ENCODE measurements at regions of chr11 and their contacts with region 1.

Region 1: DNA sequence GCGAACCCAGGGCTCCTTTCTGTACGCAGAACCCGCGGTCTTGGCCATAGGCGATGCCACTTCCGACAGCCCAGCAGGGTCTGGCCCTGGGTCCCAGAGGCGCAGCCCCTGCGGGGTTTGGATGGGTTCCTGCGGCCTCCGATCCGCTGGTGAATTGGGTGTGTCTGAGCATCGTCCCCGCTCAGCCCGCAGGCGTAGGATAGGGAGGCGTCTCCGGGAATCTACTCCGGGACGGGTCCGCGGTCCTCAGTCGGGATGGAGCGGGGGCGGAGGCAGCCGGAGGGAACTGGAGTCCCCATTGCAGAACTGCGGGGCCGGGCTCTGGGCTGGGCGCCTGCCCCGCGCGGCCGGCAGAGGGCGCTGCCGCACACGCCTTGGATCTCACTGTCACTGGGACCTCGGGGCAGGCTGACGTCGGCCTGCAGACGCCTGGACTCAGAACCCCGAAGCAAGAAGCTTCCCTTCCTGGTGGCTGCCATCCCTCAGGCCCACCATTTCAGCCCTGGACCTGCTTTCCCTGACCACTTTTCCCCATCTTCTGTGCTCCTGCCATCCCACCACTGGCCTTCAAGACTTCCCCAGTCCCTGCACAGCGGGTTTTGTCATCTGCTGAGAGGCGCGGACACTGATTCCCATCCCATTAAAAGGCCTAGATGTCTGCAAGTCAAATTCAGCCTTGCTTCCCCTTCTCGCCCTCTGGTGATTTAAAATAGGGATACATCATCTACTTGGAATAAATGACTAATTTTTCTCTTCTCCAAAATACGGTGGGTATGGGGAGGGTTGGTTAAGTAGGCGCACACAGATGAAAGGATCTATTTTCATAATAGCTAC is 38.3 kb upstream of the CREB3L1 start:
- DNase-seq: peak; percentile 96
- ATAC-seq: peak; percentile 80
- H3K4me3 Mint-ChIP-seq: peak overlapping the region; percentile 66
- H3K27ac Mint-ChIP-seq: no peak overlapping the region
- H3K4me1 Mint-ChIP-seq: peaks cover 44% of the 10 kb centered on the region
- H3K27me3 Mint-ChIP-seq: peaks cover 43% of the 10 kb centered on the region
- CTCF ChIP-seq: peak; percentile 97

Region 2: DNA sequence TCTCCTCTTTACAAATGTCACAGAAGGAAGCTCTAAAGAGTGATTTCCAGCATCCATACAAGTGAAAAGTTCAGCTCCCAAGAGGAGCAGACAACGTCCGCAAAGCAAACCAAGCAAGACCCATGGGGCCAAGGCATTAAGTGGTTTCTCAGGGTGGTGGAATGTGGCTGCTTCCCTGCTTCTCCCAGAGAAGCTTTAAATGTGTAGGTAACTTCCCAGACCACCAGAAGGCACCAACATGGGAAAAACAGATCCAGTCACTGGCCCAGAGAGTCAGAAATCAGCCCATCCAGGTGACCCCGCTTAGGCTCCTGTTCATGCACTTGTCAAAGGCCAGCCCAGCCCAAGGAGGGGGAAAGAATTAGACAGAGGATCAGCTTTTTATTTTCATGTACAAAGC is 104.6 kb before region 1 on chr11:
- CTCF ChIA-PET with region 1: interaction called, 35 read pairs
- POLR2A ChIA-PET with region 1: interaction called, 3 read pairs
- DNase-seq: peak; percentile 32
- ATAC-seq: peak; percentile 93
- H3K4me3 Mint-ChIP-seq: no peak overlapping the region
- H3K27ac Mint-ChIP-seq: 0 out of 2 replicates have a peak overlapping the region, but pooled peaks have one; percentile 15
- H3K4me1 Mint-ChIP-seq: peaks cover 26% of the 10 kb centered on the region
- H3K27me3 Mint-ChIP-seq: no peaks in the 10 kb centered on the region; the same call in 1 of the 2 replicates
- CTCF ChIP-seq: no peak

Region 3: GRCh38 chr11:46308631-46309419 is 69.6 kb after region 1 on chr11:
- CTCF ChIA-PET with region 1: interaction called, 119 read pairs
- POLR2A ChIA-PET with region 1: interaction called, 12 read pairs
- DNase-seq: peak; percentile 87
- ATAC-seq: peak; percentile 85
- H3K4me3 Mint-ChIP-seq: no peak overlapping the region
- H3K27ac Mint-ChIP-seq: 0 out of 2 replicates have a peak overlapping the region, but pooled peaks have one; percentile 27
- H3K4me1 Mint-ChIP-seq: peaks cover 19% of the 10 kb centered on the region
- H3K27me3 Mint-ChIP-seq: no peaks in the 10 kb centered on the region; the same call in 1 of the 2 replicates
- CTCF ChIP-seq: peak; percentile 85

Region 4: DNA sequence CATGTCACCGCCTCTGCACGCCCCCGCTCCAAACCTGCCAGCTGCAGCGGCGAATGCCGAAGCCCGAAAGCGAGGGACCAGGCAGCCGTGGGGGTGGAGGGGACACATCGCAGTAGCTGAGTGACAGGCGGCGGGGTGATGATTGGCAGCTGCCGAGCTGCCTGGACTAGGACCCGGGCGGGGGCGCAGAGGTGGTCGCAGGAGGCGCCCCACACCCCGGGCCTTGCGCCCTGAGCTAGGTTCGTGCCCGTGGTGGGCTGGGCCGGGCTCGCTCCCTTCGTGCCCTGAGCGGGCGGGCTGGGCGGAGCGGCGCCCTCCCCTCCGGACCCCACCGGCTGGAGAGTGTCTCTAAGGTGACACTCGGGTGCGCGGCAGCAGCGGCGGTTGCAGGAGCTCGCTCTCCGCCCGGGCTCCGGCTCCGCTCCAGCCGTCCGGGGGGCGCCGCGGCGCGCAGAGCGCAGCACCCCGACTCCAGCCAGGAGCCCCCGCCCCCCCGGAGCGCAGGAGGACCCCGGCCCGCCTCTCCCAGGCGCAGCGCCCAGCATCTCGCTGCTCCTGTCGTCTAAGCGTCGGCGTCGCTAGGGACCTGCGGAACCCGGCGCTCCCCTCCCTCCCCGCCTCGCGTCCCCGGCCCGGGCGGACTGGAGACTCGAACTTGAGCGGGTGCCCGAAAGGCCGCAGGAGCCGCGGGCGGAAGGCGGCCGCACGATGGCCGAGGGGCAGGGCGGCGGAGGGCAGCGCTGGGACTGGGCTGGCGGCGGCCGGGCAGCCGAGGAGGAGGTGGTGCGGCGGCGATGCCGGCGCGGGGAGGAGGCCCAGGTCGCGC is 93.6 kb after region 1 on chr11:
- CTCF ChIA-PET with region 1: interaction called, 20 read pairs
- POLR2A ChIA-PET with region 1: interaction called, 7 read pairs
- DNase-seq: peak; percentile 55
- ATAC-seq: peak; percentile 54
- H3K4me3 Mint-ChIP-seq: peak overlapping the region; percentile 69
- H3K27ac Mint-ChIP-seq: no peak overlapping the region
- H3K4me1 Mint-ChIP-seq: peaks cover 67% of the 10 kb centered on the region
- H3K27me3 Mint-ChIP-seq: peaks cover 56% of the 10 kb centered on the region
- CTCF ChIP-seq: no peak

Region 5: DNA sequence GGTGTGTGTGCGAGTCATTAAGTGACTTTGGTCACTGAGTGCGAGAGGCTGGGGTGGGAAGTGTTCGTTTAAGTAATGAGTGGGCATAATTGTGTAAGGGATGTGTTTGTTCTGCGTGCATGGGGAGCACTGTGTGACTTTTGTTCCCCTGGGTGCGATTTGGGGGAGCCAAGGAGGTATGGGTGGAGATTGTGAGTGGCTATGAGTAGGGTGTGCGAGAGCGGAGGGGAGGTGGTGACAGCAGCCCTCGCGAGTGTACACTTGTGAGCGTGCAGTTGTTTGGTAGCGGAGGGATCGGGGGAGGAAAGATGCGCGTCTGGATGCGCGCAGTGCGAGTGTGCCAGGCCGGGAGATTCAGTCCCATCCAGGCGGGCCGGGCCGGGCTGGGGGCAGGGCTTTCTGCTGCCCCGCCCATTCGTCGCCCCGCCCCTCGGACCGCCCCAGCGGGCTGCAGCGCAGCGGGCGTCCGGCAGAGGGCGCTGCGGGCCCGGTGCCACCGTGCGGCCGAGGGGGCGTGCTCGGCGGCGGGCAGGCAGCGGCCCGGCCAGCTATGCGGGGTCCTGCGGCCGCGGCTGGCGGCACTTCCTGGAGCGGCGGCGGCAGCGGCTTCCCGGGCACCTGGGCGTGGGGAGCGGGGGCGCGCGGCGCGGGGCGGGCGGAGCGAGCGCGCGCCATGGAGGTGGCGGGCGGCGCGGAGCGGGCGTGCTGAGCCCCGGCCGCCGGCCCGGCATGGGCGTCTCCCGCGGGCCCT is 107.9 kb after region 1 on chr11 and contains the start of gene DGKZ:
- CTCF ChIA-PET with region 1: interaction called, 43 read pairs
- POLR2A ChIA-PET with region 1: interaction called, 6 read pairs
- DNase-seq: peak; percentile 81
- ATAC-seq: peak; percentile 77
- H3K4me3 Mint-ChIP-seq: peak within 1 kb of the TSS; percentile 77
- H3K27ac Mint-ChIP-seq: no peak within 1 kb of the TSS; the same call in 1 of the 2 replicates
- H3K4me1 Mint-ChIP-seq: peaks cover 86% of the 10 kb centered on the region
- H3K27me3 Mint-ChIP-seq: peaks cover 11% of the 10 kb centered on the region
- CTCF ChIP-seq: peak; percentile 80
- total RNA-seq, gene DGKZ: 107 to 139 TPM (median 115 TPM) in 3 replicates

Region 6: GRCh38 chr11:46380340-46381047 is 141.3 kb after region 1 on chr11:
- CTCF ChIA-PET with region 1: interaction called, 11 read pairs
- POLR2A ChIA-PET with region 1: interaction called, 7 read pairs
- DNase-seq: peak; percentile 91
- ATAC-seq: peak; percentile 38
- H3K4me3 Mint-ChIP-seq: peak overlapping the region; percentile 69
- H3K27ac Mint-ChIP-seq: peak overlapping the region; percentile 76
- H3K4me1 Mint-ChIP-seq: peaks cover 21% of the 10 kb centered on the region
- H3K27me3 Mint-ChIP-seq: no peaks in the 10 kb centered on the region
- CTCF ChIP-seq: no peak

Region 7: DNA sequence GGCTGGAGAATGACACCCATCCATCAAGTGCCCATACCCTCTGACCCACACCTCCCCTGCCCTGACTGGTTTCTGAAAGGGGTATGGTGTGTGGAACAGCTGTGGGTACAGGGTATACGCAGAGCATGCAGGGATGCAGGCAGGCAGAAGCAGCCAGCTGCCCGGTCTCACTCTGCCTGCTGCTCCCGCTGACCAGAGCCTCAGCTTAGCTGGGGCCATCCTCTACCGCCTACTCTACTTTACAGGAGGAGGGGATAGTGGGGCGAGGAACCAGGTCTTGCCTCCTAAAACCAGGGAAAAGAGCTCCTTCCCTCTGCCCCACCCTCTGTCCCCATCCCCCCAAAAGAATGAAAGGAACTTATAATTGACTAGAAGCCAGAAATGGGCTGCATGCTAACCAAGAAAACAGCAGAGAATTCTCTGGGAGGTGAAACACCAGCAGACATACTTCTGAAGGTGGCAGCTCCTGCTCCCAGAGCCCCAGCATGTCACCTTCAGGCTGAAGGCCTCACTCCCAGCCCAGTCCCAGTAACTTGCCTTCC is 165.4 kb after region 1 on chr11:
- CTCF ChIA-PET with region 1: no interaction called
- POLR2A ChIA-PET with region 1: no interaction called
- DNase-seq: no peak
- ATAC-seq: no peak; the same call in 1 of the 2 replicates
- H3K4me3 Mint-ChIP-seq: no peak overlapping the region
- H3K27ac Mint-ChIP-seq: no peak overlapping the region
- H3K4me1 Mint-ChIP-seq: no peaks in the 10 kb centered on the region
- H3K27me3 Mint-ChIP-seq: no peaks in the 10 kb centered on the region
- CTCF ChIP-seq: no peak